Activated B cell treated with CpG ODN at 0.5 μM for 24 hours (primary cell): ENCODE measurements at regions of chr9 and their contacts with region 1.

Region 1: GRCh38 chr9:91727316-91727861 is 222.6 kb downstream of the ROR2 start:
- DNase-seq: no peak
- ATAC-seq: peak; percentile 85
- H3K4me3 Mint-ChIP-seq: no peak overlapping the region
- H3K27ac Mint-ChIP-seq: no peak overlapping the region
- H3K4me1 Mint-ChIP-seq: no peaks in the 10 kb centered on the region
- H3K27me3 Mint-ChIP-seq: no peaks in the 10 kb centered on the region
- CTCF ChIP-seq: no peak

Region 2: GRCh38 chr9:90985631-90986030 is 741.8 kb before region 1 on chr9:
- CTCF ChIA-PET with region 1: no interaction called
- POLR2A ChIA-PET with region 1: no interaction called
- intact Hi-C with region 1: loop called (anchors 5 kb)
- DNase-seq: no peak
- ATAC-seq: no peak
- H3K4me3 Mint-ChIP-seq: no peak overlapping the region
- H3K27ac Mint-ChIP-seq: no peak overlapping the region
- H3K4me1 Mint-ChIP-seq: no peaks in the 10 kb centered on the region
- H3K27me3 Mint-ChIP-seq: peaks cover 1% of the 10 kb centered on the region
- CTCF ChIP-seq: no peak

Region 3: DNA sequence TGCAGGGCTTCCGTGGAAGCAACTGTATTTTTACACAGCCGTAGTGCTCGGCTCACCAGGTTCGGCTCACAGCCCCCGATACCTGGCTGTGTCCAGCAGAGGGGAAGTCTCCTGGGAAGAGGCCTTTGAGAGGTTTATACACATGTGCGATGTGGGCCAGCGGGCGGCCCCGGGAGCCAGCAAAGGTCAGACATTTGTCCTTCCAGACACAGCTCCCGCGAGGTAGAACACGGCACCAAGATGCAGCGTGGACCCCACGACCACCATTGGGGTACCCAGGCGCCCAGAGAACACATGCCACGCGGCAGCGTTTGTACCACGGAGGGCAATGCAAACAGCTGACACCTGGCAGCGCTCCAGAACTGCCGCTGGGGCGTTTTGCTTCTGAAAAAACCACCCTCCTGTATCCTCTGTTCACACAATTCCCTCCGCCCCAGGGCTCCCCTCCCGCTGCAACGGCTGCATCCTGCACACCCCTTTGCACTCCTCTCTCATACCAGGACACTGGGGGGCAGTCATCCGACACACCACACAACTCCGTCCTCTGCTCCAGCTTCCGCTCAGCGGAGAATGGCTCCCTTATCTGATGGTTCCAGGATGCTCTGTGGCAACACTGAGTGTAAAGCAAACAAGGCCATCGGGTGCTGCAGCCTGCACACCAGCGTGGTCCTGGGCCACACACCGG is 690.4 kb before region 1 on chr9:
- CTCF ChIA-PET with region 1: interaction called, 5 read pairs
- POLR2A ChIA-PET with region 1: no interaction called
- intact Hi-C with region 1: loop called (anchors 1 kb)
- DNase-seq: no peak
- ATAC-seq: peak; percentile 34
- H3K4me3 Mint-ChIP-seq: peak overlapping the region; percentile 55
- H3K27ac Mint-ChIP-seq: no peak overlapping the region
- H3K4me1 Mint-ChIP-seq: peaks cover 31% of the 10 kb centered on the region
- H3K27me3 Mint-ChIP-seq: peaks cover 12% of the 10 kb centered on the region
- CTCF ChIP-seq: no peak

Region 4: GRCh38 chr9:91089405-91090129 is 637.8 kb before region 1 on chr9:
- CTCF ChIA-PET with region 1: interaction called, 3 read pairs
- POLR2A ChIA-PET with region 1: no interaction called
- intact Hi-C with region 1: loop called (anchors 5 kb)
- DNase-seq: no peak
- ATAC-seq: peak; percentile 28
- H3K4me3 Mint-ChIP-seq: no peak overlapping the region
- H3K27ac Mint-ChIP-seq: no peak overlapping the region
- H3K4me1 Mint-ChIP-seq: no peaks in the 10 kb centered on the region
- H3K27me3 Mint-ChIP-seq: no peaks in the 10 kb centered on the region
- CTCF ChIP-seq: no peak

Region 5: DNA sequence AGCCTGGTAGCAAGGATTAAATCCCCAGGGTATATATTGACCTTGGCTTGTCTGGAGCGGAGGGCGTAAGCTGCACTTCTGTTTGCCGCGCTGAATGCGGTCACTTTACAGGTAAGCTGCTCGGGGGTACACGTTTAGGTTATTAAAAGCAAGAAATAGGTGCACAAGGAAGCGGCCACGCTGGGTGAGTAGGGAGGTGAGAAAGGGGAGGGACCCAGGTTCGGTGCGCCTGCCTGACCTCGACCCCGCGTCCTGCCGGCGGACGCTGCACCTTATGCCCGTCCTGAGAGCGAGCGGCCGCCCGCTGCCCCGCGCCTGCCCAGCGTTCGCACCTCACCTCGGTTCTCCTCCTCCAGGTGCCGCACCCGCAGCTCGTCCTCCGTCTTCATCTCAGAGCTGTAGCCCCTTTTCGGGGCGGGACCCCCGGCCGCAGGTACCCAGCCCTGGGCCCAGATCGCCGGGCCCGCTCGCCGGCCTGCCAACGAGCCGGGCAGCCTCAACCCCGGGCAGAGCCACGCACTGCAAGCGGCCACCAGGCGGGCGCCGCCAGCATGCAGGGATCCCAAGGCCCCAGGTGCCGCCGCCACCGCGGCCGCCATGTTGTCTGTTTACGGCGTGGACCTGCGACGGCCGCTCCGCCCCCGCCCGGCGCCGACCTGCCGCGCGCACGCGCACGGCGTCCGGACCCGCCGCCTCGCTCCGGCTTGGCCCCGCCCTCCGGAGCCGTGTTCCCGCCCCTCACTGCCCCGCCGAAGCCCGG is 365.9 kb before region 1 on chr9 and contains the start of gene AUH:
- CTCF ChIA-PET with region 1: no interaction called
- POLR2A ChIA-PET with region 1: no interaction called
- intact Hi-C with region 1: loop called (anchors 5 kb)
- DNase-seq: peak; percentile 89
- ATAC-seq: peak; percentile 97
- H3K4me3 Mint-ChIP-seq: peak within 1 kb of the TSS; percentile 94
- H3K27ac Mint-ChIP-seq: peak within 1 kb of the TSS; percentile 89
- H3K4me1 Mint-ChIP-seq: peaks cover 34% of the 10 kb centered on the region
- H3K27me3 Mint-ChIP-seq: no peaks in the 10 kb centered on the region
- CTCF ChIP-seq: no peak
- total RNA-seq, gene AUH: 11.1 and 14.0 TPM in 2 replicates

Region 6: DNA sequence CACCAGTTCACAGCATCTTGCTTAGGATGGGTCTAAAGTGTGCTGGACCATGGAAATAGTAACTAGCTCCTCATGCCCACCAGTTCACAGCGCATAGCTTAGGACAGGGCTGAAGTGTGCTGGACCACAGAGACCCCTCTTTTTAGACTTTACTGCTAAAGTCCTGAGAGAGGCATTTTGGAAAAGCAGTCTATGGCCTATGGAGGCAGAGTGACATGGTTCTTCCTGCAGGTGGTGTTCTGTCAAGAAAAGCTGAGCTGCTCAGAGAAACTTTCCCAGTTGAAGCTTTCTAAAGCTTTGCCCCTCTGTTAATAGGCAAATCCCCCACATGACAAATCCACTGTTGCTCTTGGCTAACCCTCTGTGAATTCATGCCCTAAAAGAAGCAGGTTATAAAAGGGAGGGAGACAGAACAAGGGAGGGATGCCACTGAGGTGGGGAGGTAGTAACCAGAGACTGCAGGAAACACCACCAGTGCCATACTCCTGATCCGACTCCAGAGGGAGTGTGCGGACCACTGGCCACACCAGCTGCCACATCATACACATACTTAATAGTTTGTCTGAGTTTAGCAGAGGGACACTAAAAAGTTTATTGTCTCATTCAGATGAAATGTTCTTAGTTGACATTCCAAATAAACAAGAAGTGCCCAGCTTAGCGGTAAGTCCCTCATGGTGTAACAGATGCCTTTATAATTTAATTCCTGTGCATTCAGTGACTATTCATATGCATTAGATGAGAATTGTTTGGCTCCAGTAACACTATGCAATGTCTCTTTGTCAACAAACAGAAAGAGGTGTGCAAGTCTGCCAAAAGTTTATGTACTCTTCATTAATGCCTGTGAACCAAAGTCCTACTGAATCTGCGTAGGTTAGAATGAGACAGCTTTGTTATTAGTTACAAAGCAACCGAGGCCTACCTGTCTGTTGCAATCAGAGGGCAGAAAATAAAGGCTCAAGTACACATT is 67.6 kb before region 1 on chr9:
- CTCF ChIA-PET with region 1: interaction called, 6 read pairs
- POLR2A ChIA-PET with region 1: no interaction called
- intact Hi-C with region 1: loop called (anchors 1 kb)
- DNase-seq: no peak
- ATAC-seq: no peak
- H3K4me3 Mint-ChIP-seq: no peak overlapping the region
- H3K27ac Mint-ChIP-seq: no peak overlapping the region
- H3K4me1 Mint-ChIP-seq: no peaks in the 10 kb centered on the region
- H3K27me3 Mint-ChIP-seq: peaks cover 5% of the 10 kb centered on the region
- CTCF ChIP-seq: no peak

Region 7: GRCh38 chr9:91681461-91682305 is 45.7 kb before region 1 on chr9:
- CTCF ChIA-PET with region 1: no interaction called
- POLR2A ChIA-PET with region 1: no interaction called
- intact Hi-C with region 1: loop called (anchors 5 kb)
- DNase-seq: peak; percentile 51
- ATAC-seq: peak; percentile 87
- H3K4me3 Mint-ChIP-seq: peak overlapping the region; percentile 70
- H3K27ac Mint-ChIP-seq: no peak overlapping the region
- H3K4me1 Mint-ChIP-seq: peaks cover 5% of the 10 kb centered on the region
- H3K27me3 Mint-ChIP-seq: peaks cover 27% of the 10 kb centered on the region
- CTCF ChIP-seq: no peak

Region 8: DNA sequence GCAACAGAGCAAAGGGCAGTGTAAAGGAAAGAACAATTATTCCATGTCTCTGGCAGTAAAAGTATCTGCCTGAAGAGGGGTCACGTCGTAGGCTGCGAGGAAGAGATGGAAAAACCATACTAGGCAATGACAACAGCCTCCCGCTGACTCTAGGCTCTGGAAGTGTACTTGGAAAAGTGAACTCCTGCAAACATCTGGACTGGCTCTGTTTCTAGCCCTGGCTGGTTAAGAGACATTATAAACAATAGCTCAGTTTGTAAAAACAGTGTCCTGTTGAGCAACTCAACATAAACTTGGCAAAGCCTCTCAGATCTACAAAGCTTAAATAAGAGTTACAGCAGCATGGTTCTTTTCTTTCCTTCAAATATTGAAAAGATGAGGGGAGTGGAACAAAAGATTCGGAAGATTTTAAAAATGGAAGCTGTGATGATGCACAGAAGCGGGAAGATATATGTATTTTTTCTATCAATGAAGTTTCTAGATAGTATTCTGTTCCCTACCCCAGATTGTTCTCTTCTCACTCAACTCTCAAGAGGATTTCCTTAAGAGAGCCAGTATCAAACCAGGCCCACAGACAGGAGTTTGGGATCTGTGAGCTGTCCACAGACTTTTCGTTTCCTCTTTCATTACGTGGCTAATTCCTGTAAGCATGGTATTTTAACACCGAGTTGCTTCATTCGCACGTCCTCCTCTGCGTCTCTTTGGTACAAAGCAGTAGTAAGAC is 308.5 kb after region 1 on chr9:
- CTCF ChIA-PET with region 1: no interaction called
- POLR2A ChIA-PET with region 1: no interaction called
- intact Hi-C with region 1: no loop called
- DNase-seq: no peak
- ATAC-seq: no peak
- H3K4me3 Mint-ChIP-seq: no peak overlapping the region
- H3K27ac Mint-ChIP-seq: no peak overlapping the region
- H3K4me1 Mint-ChIP-seq: no peaks in the 10 kb centered on the region
- H3K27me3 Mint-ChIP-seq: no peaks in the 10 kb centered on the region
- CTCF ChIP-seq: no peak